ENCODE measurements at regions of chr11 and their contacts with region 1.

Region 1: GRCh38 chr11:122578168-122578825 is 77.2 kb upstream of the UBASH3B start:
- DNase-seq: no peak
- H3K27ac ChIP-seq: no peak overlapping the region
- CTCF ChIP-seq: no peak

Region 2: GRCh38 chr11:122781378-122782195 is 203.3 kb after region 1 on chr11:
- CTCF ChIA-PET with region 1: interaction called, 16 read pairs
- POLR2A ChIA-PET with region 1: no interaction called
- DNase-seq: peak; percentile 85
- H3K27ac ChIP-seq: no peak overlapping the region
- CTCF ChIP-seq: peak; percentile 90

Region 3: DNA sequence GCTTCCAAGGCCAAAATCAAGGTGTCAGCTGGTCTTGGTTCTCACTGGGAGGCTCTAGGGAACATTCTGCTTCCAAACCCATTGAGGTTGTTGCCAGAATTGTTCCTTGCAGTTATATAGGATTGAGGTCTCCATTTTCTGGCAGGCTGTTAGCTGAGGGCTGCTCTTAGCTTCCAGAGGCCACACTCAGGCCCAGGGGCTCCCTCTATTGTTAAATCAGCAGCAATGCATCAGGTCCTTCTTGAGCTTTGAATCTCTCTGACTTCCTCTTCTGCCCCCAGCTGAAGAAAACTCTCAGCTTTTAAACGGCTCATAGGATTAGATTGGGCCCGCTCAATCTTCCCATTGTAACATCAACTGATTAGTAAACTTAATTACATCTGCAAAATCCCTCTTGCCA is 442.7 kb after region 1 on chr11:
- CTCF ChIA-PET with region 1: interaction called, 10 read pairs
- POLR2A ChIA-PET with region 1: no interaction called
- DNase-seq: peak; percentile 60
- H3K27ac ChIP-seq: no peak overlapping the region
- CTCF ChIP-seq: peak; percentile 46; the same call in 1 of the 2 replicates